Posterior vena cava (tissue), 2 donors: ENCODE measurements at regions of chr14 and their contacts with region 1.

Region 1: DNA sequence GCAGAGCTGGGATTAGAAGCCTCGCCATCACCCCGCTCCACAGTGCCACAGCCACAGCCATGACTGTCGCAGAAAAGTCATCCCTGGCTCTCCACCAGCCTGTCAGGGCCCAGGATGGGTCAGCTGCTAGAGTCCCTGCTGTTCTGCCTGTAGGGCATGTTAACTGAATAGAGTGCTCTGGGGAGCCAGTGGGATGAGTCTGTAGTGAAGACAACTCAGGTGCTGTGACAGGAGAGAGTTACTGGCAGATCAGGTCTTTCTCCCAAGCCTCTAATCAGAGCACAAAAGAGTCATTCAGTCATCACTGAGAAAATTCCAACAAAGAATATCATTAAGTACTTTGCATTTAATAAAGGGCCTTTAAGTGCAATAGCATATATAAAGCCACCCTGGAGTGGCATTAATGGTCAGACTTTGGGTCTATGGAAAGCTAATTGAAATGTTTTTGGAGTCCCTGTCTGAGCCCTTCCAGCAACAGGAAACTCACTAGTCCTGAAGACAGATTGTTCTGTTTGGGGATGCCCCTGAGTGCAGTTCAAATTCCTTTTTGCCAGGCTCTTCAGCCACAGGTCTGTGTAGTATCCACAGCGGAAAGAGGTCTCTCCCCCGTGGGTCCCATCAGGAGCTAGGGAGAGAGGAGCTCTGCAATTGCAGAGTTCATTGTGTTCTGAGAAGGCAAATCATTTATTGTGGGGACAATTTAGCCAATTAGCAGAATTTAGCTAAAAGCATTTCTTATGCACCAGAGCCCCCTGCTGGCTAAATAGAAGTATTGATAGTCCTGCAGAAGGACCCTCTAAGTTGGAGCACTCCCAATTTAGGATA is 45.2 kb upstream of the C14orf132 start:
- DNase-seq: no peak

Region 2: GRCh38 chr14:95428557-95428956 is 565.4 kb before region 1 on chr14:
- intact Hi-C with region 1: loop called in 1 of 2 experiments (anchors 5 kb)
- DNase-seq: no peak

Region 3: GRCh38 chr14:95549656-95550585 is 444.1 kb before region 1 on chr14:
- intact Hi-C with region 1: loop called in 1 of 2 experiments (anchors 10 kb)
- DNase-seq: no peak

Region 4: GRCh38 chr14:95561001-95561412 is 433.0 kb before region 1 on chr14:
- intact Hi-C with region 1: loop called (anchors 5 to 10 kb)
- DNase-seq: peak; percentile 89

Region 5: GRCh38 chr14:95573313-95573712 is 420.7 kb before region 1 on chr14:
- intact Hi-C with region 1: loop called in 1 of 2 experiments (anchors 5 kb)
- DNase-seq: no peak

Region 6: GRCh38 chr14:95961481-95961880 is 32.5 kb before region 1 on chr14:
- intact Hi-C with region 1: no loop called
- DNase-seq: no peak

Region 7: GRCh38 chr14:96275177-96276112 is 281.5 kb after region 1 on chr14:
- intact Hi-C with region 1: loop called in 1 of 2 experiments (anchors 10 kb)
- DNase-seq: peak; percentile 92